H1 (cell line): ENCODE measurements at regions of chr7 and their contacts with region 1.

Region 1: GRCh38 chr7:33471636-33472242 is 342.4 kb downstream of the BBS9 start:
- DNase-seq: no peak
- H3K4me3 ChIP-seq: no peak overlapping the region
- H3K27ac ChIP-seq: no peak overlapping the region
- H3K4me1 ChIP-seq: peaks cover 0 to 4% (median 0%) of the 10 kb centered on the region in 4 experiments; a peak in 2 of 7 replicates
- H3K27me3 ChIP-seq: no peaks in the 10 kb centered on the region
- CTCF ChIP-seq: no peak
- EP300 ChIP-seq: no peak
- POLR2A ChIP-seq: no peak
- RAD21 ChIP-seq: no peak

Region 2: DNA sequence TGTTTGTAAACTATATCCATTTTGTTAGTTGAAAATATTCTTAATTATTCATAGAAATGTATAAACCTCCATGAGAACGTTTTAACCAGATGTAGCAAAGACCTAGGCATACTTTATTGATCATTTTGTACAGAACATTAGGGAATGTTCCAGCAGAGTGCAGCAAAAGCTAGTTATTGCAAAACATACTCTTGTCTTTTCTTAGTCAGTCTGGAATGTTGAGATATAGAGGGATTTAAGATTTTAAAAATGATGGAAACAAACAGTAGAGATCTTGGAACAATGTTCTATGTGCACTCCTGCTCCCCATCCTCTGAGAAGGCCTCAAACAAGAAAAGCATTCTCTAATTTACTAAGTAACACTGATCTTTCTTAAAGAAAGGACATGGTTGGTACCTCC is 50.3 kb before region 1 on chr7:
- CTCF ChIA-PET with region 1: no interaction called
- POLR2A ChIA-PET with region 1: no interaction called
- DNase-seq: no peak
- H3K4me3 ChIP-seq: no peak overlapping the region
- H3K27ac ChIP-seq: no peak overlapping the region
- H3K4me1 ChIP-seq: peaks cover 0 to 11% (median 4%) of the 10 kb centered on the region in 4 experiments; a peak in 5 of 7 replicates
- H3K27me3 ChIP-seq: no peaks in the 10 kb centered on the region
- CTCF ChIP-seq: no peak
- EP300 ChIP-seq: no peak
- POLR2A ChIP-seq: no peak
- RAD21 ChIP-seq: no peak

Region 3: GRCh38 chr7:33459340-33459751 is 12.4 kb before region 1 on chr7:
- CTCF ChIA-PET with region 1: interaction called, 13 read pairs
- POLR2A ChIA-PET with region 1: no interaction called
- DNase-seq: peak in 1 of 2 experiments; percentile 5
- H3K4me3 ChIP-seq: no peak overlapping the region
- H3K27ac ChIP-seq: no peak overlapping the region
- H3K4me1 ChIP-seq: no peaks in the 10 kb centered on the region
- H3K27me3 ChIP-seq: no peaks in the 10 kb centered on the region
- CTCF ChIP-seq: peak; percentile 37 to 74 (median 62)
- EP300 ChIP-seq: no peak
- POLR2A ChIP-seq: no peak
- RAD21 ChIP-seq: peak; percentile 79 to 82

Region 4: DNA sequence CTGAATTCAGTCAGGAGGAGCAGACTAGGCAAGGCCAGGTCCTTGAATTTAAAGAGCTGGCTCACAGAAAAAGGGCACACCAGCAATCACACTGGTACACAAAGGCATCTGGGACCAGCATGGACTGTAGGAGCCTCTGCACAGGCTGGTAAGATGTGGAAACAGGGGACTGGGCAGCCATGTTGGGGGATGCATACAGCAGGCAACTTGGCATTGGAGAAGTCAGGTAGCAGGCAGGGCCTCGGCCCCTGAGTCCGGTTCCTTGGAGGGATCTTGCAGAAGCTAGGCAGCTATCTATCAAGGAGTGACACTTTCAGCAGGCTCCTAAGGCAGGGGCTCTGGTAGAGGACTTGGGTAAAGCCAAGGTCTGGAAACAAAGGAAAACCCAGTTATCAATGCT is 57.3 kb after region 1 on chr7:
- CTCF ChIA-PET with region 1: no interaction called
- POLR2A ChIA-PET with region 1: no interaction called
- DNase-seq: no peak
- H3K4me3 ChIP-seq: no peak overlapping the region
- H3K27ac ChIP-seq: no peak overlapping the region
- H3K4me1 ChIP-seq: no peaks in the 10 kb centered on the region; a peak in 1 of 7 replicates
- H3K27me3 ChIP-seq: no peaks in the 10 kb centered on the region
- CTCF ChIP-seq: no peak
- EP300 ChIP-seq: no peak
- POLR2A ChIP-seq: no peak
- RAD21 ChIP-seq: no peak

Region 5: DNA sequence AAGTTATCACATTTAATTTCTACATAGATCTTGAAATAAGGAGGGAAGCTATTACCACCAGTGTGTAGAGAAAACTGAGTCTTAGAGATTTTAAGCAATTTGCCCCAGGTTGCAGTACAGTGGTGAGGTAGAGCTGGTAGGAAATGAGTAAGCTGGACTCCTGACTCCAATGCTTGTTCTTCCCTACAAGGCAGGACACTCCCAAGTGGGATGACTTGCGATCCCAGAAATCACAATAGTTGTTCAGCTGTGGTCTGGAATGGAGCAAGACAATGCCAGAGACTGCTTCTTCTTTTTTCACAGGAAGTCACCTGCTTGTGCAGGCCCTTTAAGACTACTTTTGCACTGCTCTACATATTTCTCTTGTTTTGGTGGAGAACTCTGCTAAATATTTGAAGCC is 106.4 kb after region 1 on chr7:
- CTCF ChIA-PET with region 1: no interaction called
- POLR2A ChIA-PET with region 1: no interaction called
- DNase-seq: no peak
- H3K4me3 ChIP-seq: no peak overlapping the region
- H3K27ac ChIP-seq: no peak overlapping the region
- H3K4me1 ChIP-seq: no peaks in the 10 kb centered on the region
- H3K27me3 ChIP-seq: no peaks in the 10 kb centered on the region
- CTCF ChIP-seq: no peak
- EP300 ChIP-seq: no peak
- POLR2A ChIP-seq: no peak
- RAD21 ChIP-seq: no peak